ENCODE measurements at regions of chr10 and their contacts with region 1.

Region 1: DNA sequence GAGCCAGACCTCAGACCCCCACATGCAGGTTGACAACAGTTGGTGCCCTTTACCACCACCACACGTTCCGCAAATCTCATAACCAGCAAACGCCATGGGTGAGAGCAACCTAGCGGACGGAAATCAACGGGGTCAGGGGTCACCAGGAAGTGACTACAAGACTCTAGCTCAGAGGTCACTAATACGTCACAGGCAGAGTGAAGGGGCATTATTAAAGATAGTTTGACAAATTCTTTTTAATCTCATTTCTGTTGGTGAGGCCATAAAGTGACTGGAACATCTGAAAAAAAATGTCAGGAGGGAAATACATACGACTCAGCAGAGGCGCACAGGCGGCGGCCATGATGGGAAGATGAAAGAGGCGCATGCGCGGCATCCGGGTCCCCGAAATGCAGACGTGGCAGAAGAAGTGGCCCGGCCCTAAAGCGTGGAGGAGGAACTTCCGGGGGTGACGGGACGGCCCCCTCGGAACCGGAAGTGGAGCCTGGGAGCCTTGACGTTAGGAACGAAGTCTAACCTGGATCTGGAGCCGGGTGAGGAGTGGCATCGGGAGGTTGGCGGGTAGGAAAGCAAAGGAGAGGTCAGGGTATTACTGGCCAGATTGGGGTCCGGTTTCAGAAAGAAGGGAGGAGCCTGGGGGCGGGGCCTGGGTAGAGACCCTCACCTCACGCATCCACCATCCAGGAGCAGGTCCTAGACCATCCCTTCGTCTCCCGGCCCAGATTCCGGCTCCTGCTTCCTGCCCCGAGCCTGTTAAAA is at the start of gene SEC24C:
- DNase-seq: peak; percentile 92 to 97 (median 95)
- H3K4me3 ChIP-seq: peak within 1 kb of the TSS; percentile 61
- H3K4me3 Mint-ChIP-seq: peak within 1 kb of the TSS; percentile 98 to 100 (median 99)
- H3K27ac ChIP-seq: peak within 1 kb of the TSS; percentile 91
- H3K27ac Mint-ChIP-seq: peak within 1 kb of the TSS; percentile 99 to 100 (median 100)
- H3K4me1 ChIP-seq: peaks cover 37% of the 10 kb centered on the region
- H3K4me1 Mint-ChIP-seq: peaks cover 32 to 45% (median 44%) of the 10 kb centered on the region in 3 donors
- H3K27me3 ChIP-seq: no peaks in the 10 kb centered on the region
- H3K27me3 Mint-ChIP-seq: no peaks in the 10 kb centered on the region
- total RNA-seq, gene SEC24C: 93.1 to 95.9 TPM

Region 2: GRCh38 chr10:73529089-73529832 is 214.8 kb before region 1 on chr10:
- CTCF ChIA-PET with region 1: no interaction called
- POLR2A ChIA-PET with region 1: no interaction called
- DNase-seq: peak; percentile 19 to 65 (median 63)
- H3K4me3 ChIP-seq: no peak overlapping the region
- H3K4me3 Mint-ChIP-seq: no peak overlapping the region
- H3K27ac ChIP-seq: no peak overlapping the region
- H3K27ac Mint-ChIP-seq: no peak overlapping the region
- H3K4me1 ChIP-seq: no peaks in the 10 kb centered on the region
- H3K4me1 Mint-ChIP-seq: no peaks in the 10 kb centered on the region
- H3K27me3 ChIP-seq: no peaks in the 10 kb centered on the region
- H3K27me3 Mint-ChIP-seq: peaks cover 0 to 2% of the 10 kb centered on the region in 2 donors

Region 3: GRCh38 chr10:73552819-73553715 is 191.0 kb before region 1 on chr10:
- CTCF ChIA-PET with region 1: no interaction called
- POLR2A ChIA-PET with region 1: no interaction called
- DNase-seq: no peak
- H3K4me3 ChIP-seq: no peak overlapping the region
- H3K4me3 Mint-ChIP-seq: no peak overlapping the region
- H3K27ac ChIP-seq: no peak overlapping the region
- H3K27ac Mint-ChIP-seq: peak overlapping the region in 2 of 8 donors; percentile 18 to 36
- H3K4me1 ChIP-seq: no peaks in the 10 kb centered on the region
- H3K4me1 Mint-ChIP-seq: no peaks in the 10 kb centered on the region
- H3K27me3 ChIP-seq: no peaks in the 10 kb centered on the region
- H3K27me3 Mint-ChIP-seq: no peaks in the 10 kb centered on the region

Region 4: GRCh38 chr10:73730153-73730906 is 13.8 kb before region 1 on chr10:
- CTCF ChIA-PET with region 1: interaction called, 19 read pairs
- POLR2A ChIA-PET with region 1: interaction called, 32 read pairs
- DNase-seq: peak; percentile 78 to 90 (median 85)
- H3K4me3 ChIP-seq: peak overlapping the region; percentile 78
- H3K4me3 Mint-ChIP-seq: peak overlapping the region; percentile 92 to 100 (median 97)
- H3K27ac ChIP-seq: peak overlapping the region; percentile 82
- H3K27ac Mint-ChIP-seq: peak overlapping the region; percentile 88 to 100 (median 98)
- H3K4me1 ChIP-seq: peaks cover 10% of the 10 kb centered on the region
- H3K4me1 Mint-ChIP-seq: peaks cover 17 to 38% (median 24%) of the 10 kb centered on the region in 3 donors
- H3K27me3 ChIP-seq: no peaks in the 10 kb centered on the region
- H3K27me3 Mint-ChIP-seq: peaks cover 0 to 3% of the 10 kb centered on the region in 2 donors

Region 5: DNA sequence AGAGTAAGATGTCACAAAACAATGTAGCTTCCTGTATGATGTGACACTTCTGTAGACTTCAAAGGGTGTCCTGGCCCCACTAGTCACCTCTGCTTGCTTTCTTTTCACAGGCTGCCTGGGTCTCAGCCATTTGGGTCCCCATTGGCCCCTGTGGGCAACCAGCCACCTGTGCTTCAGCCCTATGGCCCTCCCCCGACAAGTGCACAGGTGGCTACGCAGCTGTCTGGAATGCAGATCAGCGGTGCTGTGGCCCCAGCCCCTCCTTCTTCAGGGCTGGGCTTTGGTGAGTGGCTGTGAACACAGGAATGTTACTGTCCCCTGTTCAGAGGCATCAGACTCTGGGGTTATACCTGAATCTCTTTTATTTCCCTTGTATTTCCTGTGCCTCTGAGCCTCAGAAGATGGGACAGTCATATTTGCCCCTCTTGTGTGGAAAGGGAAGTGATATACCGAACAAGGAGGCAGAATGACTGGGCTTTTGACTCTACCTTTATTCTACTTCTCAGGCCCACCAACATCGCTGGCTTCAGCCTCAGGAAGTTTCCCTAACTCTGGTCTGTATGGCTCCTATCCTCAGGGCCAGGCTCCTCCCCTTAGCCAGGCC is 15.5 kb after region 1 on chr10:
- CTCF ChIA-PET with region 1: interaction called, 26 read pairs
- POLR2A ChIA-PET with region 1: interaction called, 14 read pairs
- DNase-seq: peak; percentile 49 to 92 (median 79)
- H3K4me3 ChIP-seq: no peak overlapping the region
- H3K4me3 Mint-ChIP-seq: peak overlapping the region; percentile 34 to 90 (median 74)
- H3K27ac ChIP-seq: peak overlapping the region; percentile 72
- H3K27ac Mint-ChIP-seq: peak overlapping the region; percentile 90 to 99 (median 95)
- H3K4me1 ChIP-seq: peaks cover 54% of the 10 kb centered on the region
- H3K4me1 Mint-ChIP-seq: peaks cover 71 to 81% (median 78%) of the 10 kb centered on the region in 3 donors
- H3K27me3 ChIP-seq: no peaks in the 10 kb centered on the region
- H3K27me3 Mint-ChIP-seq: no peaks in the 10 kb centered on the region